Activated CD4-positive, alpha-beta T cell treated with anti-CD3 and anti-CD28 coated beads for 36 hours (primary cell): ENCODE measurements at regions of chr19 and their contacts with region 1.

Region 1: GRCh38 chr19:12666265-12667048 is at the starts of genes MAN2B1 and WDR83:
- DNase-seq: peak; percentile 90
- ATAC-seq: peak; percentile 73
- H3K4me3 Mint-ChIP-seq: peak within 1 kb of the TSS; percentile 86
- H3K27ac Mint-ChIP-seq: peak within 1 kb of the TSS; percentile 83
- H3K4me1 Mint-ChIP-seq: peaks cover 43% of the 10 kb centered on the region
- H3K27me3 Mint-ChIP-seq: no peaks in the 10 kb centered on the region
- total RNA-seq, gene MAN2B1: 118 to 154 TPM
- total RNA-seq, gene WDR83: 13.5 to 19.5 TPM

Region 2: DNA sequence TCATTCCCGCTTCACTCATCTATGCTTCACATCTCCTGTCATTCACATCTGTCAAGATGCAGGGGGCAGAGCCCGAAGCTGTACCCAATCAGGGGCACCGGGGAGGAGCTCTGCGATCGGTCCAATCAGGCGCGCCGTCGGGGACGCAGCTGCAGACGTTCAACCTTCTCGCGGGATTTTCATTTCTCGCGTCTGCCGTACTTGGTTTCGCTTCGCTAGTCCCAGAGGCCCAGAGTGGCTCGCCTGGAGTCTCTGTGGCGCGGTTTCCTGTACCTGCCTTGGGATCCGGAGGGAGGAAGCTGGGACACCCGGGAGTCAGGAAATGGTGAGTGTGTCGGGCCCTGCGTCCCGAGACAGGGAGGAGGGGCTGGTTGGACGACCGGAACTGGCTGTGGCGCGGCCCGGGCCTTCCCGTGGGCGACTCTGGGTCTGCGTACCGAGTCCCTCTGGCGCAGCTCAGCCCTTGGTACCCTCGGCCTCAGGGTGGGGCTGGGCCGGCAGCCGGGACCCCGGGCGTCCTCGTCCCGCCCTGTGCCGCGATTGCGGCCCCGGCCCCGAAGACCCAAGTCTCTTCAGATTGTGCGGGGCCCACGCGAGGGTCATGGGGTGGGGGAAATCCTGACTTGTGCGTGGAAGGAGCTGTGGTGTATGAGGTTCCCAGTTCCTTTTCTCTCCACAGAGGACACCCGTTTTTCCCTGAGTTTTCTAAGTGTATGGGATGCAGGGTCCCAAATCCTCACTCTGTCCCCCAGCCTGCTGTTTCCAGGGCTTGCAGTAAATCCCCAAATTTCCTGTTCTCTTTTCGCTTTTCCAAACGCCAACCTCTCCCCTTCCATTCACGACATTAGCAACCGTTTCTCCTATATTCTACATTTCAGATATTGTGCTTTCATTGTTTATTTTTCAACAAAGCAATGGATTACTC is 503.3 kb before region 1 on chr19 and contains the start of gene ZNF136:
- CTCF ChIA-PET with region 1: no interaction called
- POLR2A ChIA-PET with region 1: no interaction called
- intact Hi-C with region 1: loop called in 1 of 2 experiments (anchors 2 kb)
- DNase-seq: peak; percentile 97
- ATAC-seq: peak; percentile 100
- H3K4me3 Mint-ChIP-seq: peak within 1 kb of the TSS; percentile 98
- H3K27ac Mint-ChIP-seq: peak within 1 kb of the TSS; percentile 99
- H3K4me1 Mint-ChIP-seq: peaks cover 38% of the 10 kb centered on the region
- H3K27me3 Mint-ChIP-seq: no peaks in the 10 kb centered on the region
- total RNA-seq, gene ZNF136: 11.7 to 12.9 TPM

Region 3: DNA sequence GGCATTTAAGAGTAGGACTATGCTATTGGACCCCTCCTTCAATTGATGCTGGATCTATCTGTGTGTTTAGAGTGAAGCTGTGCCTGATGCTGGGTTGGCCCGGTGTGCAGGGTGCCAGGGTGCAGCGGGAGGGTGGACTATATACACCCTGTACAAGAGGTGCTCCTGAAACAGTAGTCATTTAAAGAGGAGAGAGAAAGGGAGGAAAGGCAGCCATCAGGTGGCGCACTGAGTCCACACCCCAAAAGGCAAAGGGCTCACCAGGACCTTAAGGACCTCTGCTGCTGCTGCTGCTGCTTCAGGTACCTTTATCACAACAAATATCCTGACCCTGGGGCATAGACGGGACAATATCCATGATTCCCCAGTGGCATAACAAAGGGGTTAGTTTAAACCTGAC is 464.2 kb before region 1 on chr19:
- CTCF ChIA-PET with region 1: no interaction called
- POLR2A ChIA-PET with region 1: no interaction called
- intact Hi-C with region 1: loop called in 1 of 2 experiments (anchors 5 kb)
- DNase-seq: peak; percentile 80
- ATAC-seq: peak; percentile 96
- H3K4me3 Mint-ChIP-seq: no peak overlapping the region
- H3K27ac Mint-ChIP-seq: no peak overlapping the region
- H3K4me1 Mint-ChIP-seq: peaks cover 23% of the 10 kb centered on the region
- H3K27me3 Mint-ChIP-seq: no peaks in the 10 kb centered on the region

Region 4: GRCh38 chr19:12294249-12295158 is 372.0 kb before region 1 on chr19 and contains the start of gene ZNF44:
- CTCF ChIA-PET with region 1: no interaction called
- POLR2A ChIA-PET with region 1: no interaction called
- intact Hi-C with region 1: loop called in 1 of 2 experiments (anchors 2 kb)
- DNase-seq: peak; percentile 98
- ATAC-seq: peak; percentile 98
- H3K4me3 Mint-ChIP-seq: peak within 1 kb of the TSS; percentile 98
- H3K27ac Mint-ChIP-seq: peak within 1 kb of the TSS; percentile 98
- H3K4me1 Mint-ChIP-seq: peaks cover 32% of the 10 kb centered on the region
- H3K27me3 Mint-ChIP-seq: no peaks in the 10 kb centered on the region
- total RNA-seq, gene ZNF44: 7.3 to 8.1 TPM

Region 5: DNA sequence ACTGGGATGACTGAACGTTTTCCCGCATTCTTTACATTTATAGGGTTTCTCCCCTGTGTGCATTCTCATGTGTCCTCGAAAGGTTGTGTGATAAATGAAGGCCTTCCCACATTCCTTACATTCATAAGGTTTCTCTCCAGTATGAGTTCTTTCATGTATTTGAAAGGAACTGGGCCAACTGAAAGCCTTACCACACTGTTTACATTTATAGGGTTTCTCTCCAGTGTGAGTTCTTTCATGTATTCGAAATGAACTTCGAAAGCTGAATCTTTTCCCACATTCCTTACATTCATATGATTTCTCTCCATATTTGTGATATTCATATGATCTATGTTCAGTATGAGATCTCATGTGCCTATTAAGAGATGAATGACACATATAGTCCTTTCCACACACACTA is 201.2 kb before region 1 on chr19:
- CTCF ChIA-PET with region 1: no interaction called
- POLR2A ChIA-PET with region 1: no interaction called
- intact Hi-C with region 1: no loop called
- DNase-seq: no peak
- ATAC-seq: no peak
- H3K4me3 Mint-ChIP-seq: no peak overlapping the region
- H3K27ac Mint-ChIP-seq: no peak overlapping the region
- H3K4me1 Mint-ChIP-seq: no peaks in the 10 kb centered on the region
- H3K27me3 Mint-ChIP-seq: no peaks in the 10 kb centered on the region

Region 6: GRCh38 chr19:12564016-12564664 is 102.3 kb before region 1 on chr19:
- CTCF ChIA-PET with region 1: interaction called, 7 read pairs
- POLR2A ChIA-PET with region 1: interaction called, 3 read pairs
- intact Hi-C with region 1: loop called in 1 of 2 experiments (anchors 1 kb)
- DNase-seq: peak; percentile 95
- ATAC-seq: peak; percentile 98
- H3K4me3 Mint-ChIP-seq: peak overlapping the region; percentile 25
- H3K27ac Mint-ChIP-seq: no peak overlapping the region
- H3K4me1 Mint-ChIP-seq: peaks cover 5% of the 10 kb centered on the region
- H3K27me3 Mint-ChIP-seq: no peaks in the 10 kb centered on the region

Region 7: GRCh38 chr19:12623361-12624022 is 43.0 kb before region 1 on chr19:
- CTCF ChIA-PET with region 1: no interaction called
- POLR2A ChIA-PET with region 1: no interaction called
- intact Hi-C with region 1: no loop called
- DNase-seq: no peak
- ATAC-seq: no peak
- H3K4me3 Mint-ChIP-seq: no peak overlapping the region
- H3K27ac Mint-ChIP-seq: no peak overlapping the region
- H3K4me1 Mint-ChIP-seq: peaks cover 3% of the 10 kb centered on the region
- H3K27me3 Mint-ChIP-seq: no peaks in the 10 kb centered on the region

Region 8: GRCh38 chr19:12639901-12640613 is 26.4 kb before region 1 on chr19:
- CTCF ChIA-PET with region 1: interaction called, 7 read pairs
- POLR2A ChIA-PET with region 1: no interaction called
- intact Hi-C with region 1: loop called in 1 of 2 experiments (anchors 1 kb)
- DNase-seq: peak; percentile 95
- ATAC-seq: peak; percentile 94
- H3K4me3 Mint-ChIP-seq: peak overlapping the region; percentile 70
- H3K27ac Mint-ChIP-seq: peak overlapping the region; percentile 85
- H3K4me1 Mint-ChIP-seq: peaks cover 23% of the 10 kb centered on the region
- H3K27me3 Mint-ChIP-seq: no peaks in the 10 kb centered on the region

Region 9: GRCh38 chr19:12938234-12939025 is 272.0 kb after region 1 on chr19 and contains the start of gene CALR:
- CTCF ChIA-PET with region 1: no interaction called
- POLR2A ChIA-PET with region 1: no interaction called
- intact Hi-C with region 1: no loop called
- DNase-seq: peak; percentile 99
- ATAC-seq: peak; percentile 89
- H3K4me3 Mint-ChIP-seq: peak within 1 kb of the TSS; percentile 99
- H3K27ac Mint-ChIP-seq: peak within 1 kb of the TSS; percentile 96
- H3K4me1 Mint-ChIP-seq: peaks cover 59% of the 10 kb centered on the region
- H3K27me3 Mint-ChIP-seq: no peaks in the 10 kb centered on the region
- total RNA-seq, gene CALR: 557 to 569 TPM

Region 10: GRCh38 chr19:13022859-13023636 is 356.6 kb after region 1 on chr19:
- CTCF ChIA-PET with region 1: no interaction called
- POLR2A ChIA-PET with region 1: no interaction called
- intact Hi-C with region 1: no loop called
- DNase-seq: peak; percentile 35
- ATAC-seq: peak; percentile 53
- H3K4me3 Mint-ChIP-seq: peak overlapping the region; percentile 55
- H3K27ac Mint-ChIP-seq: no peak overlapping the region
- H3K4me1 Mint-ChIP-seq: peaks cover 18% of the 10 kb centered on the region
- H3K27me3 Mint-ChIP-seq: peaks cover 31% of the 10 kb centered on the region